ENCODE measurements at regions of chr2 and their contacts with region 1.

Region 1: DNA sequence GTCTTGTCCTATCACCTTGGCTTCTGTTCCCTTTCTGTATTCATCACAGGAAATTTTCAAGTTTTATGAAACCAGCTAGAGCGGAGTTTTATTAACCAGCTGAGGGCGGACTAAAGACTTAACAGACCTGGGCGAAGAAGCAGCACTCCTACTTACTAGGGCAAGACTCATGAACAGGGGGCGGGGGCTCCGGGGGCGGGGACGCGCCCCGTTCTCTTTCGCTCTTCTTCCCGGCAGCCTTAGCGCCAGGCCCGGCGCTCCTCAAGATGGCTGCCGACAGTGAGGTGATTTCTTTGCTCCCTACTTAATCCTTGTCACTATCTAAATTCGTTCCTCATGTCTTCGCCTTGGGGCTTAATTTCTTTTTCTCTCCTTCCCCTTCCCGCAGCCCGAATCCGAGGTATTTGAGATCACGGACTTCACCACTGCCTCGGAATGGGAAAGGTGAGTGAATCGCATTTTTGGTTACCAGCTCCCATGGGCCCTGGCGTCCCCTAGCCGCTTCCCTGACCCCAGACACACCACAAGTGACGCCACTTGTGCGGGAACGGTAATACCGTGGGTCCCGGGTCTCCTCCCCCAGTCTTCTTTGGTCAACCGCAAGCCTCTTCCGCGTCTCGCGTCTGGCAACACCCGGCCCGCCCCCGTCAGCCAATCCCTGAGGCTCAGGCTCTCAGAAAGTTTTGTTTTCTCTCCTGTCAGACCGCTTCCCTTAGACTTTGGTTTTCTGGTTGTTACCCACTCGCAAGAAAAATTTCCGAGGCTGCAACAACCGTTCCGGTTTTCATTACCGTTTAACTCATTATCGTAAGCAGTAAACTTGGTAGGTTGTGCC is at the start of gene RAB3GAP1:
- DNase-seq: peak; percentile 76 to 96 (median 94)
- ATAC-seq: peak; percentile 93
- H3K4me3 ChIP-seq: peak within 1 kb of the TSS; percentile 69
- H3K4me3 Mint-ChIP-seq: peak within 1 kb of the TSS; percentile 94 to 99 (median 97)
- H3K27ac ChIP-seq: peak within 1 kb of the TSS; percentile 99
- H3K27ac Mint-ChIP-seq: peak within 1 kb of the TSS; percentile 98 to 100 (median 99)
- H3K4me1 ChIP-seq: peaks cover 0 to 22% of the 10 kb centered on the region in 2 donors
- H3K4me1 Mint-ChIP-seq: peaks cover 24 to 52% (median 48%) of the 10 kb centered on the region in 7 donors
- H3K27me3 ChIP-seq: no peaks in the 10 kb centered on the region
- H3K27me3 Mint-ChIP-seq: peaks cover 0 to 6% (median 0%) of the 10 kb centered on the region in 5 donors
- total RNA-seq, gene RAB3GAP1: 24.3 to 58.7 (median 42.9) TPM

Region 2: DNA sequence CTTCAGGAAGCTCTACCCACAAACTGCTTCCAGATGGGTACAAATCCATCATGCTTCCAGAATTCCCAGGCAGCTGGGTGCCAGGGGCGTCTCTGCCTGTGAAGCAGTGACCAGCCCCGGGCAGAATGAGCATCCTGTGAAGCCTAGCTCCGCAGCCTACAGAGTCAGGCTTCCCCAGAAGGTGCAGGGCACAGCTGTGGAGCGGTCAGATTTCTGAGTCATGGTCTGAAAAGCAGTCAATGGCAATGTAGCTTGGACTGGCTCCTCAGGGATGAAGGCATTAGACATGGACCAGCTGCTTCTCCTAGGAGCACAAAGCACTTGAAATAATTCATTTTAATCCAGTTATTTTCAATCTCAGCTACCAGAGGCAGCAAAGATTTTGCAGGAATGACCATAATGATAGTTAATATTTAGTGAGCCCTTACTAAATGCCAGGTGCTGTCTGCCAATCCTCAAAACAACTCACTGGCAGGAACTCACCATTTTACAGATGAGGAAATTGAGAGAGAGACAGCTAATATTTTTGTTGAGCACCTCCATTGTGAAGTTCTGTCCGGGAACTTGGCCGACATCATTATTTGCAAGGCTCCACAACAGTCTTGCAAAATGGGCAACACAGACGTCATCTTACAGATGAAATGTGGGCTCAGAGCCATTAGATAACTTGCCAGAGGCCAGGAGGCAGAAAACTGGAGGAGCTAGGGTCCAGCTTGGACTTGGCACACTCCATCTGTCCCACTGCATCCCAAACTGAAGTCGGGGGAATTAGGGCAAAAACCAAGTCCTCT is 182.1 kb before region 1 on chr2:
- CTCF ChIA-PET with region 1: no interaction called
- POLR2A ChIA-PET with region 1: no interaction called
- intact Hi-C with region 1: no loop called
- DNase-seq: no peak
- ATAC-seq: no peak
- H3K4me3 ChIP-seq: no peak overlapping the region
- H3K4me3 Mint-ChIP-seq: no peak overlapping the region
- H3K27ac ChIP-seq: no peak overlapping the region
- H3K27ac Mint-ChIP-seq: no peak overlapping the region
- H3K4me1 ChIP-seq: no peaks in the 10 kb centered on the region
- H3K4me1 Mint-ChIP-seq: peaks cover 0 to 1% (median 0%) of the 10 kb centered on the region in 7 donors
- H3K27me3 ChIP-seq: no peaks in the 10 kb centered on the region
- H3K27me3 Mint-ChIP-seq: no peaks in the 10 kb centered on the region

Region 3: GRCh38 chr2:134918526-134919340 is 133.5 kb before region 1 on chr2 and contains the start of gene CCNT2:
- CTCF ChIA-PET with region 1: no interaction called
- POLR2A ChIA-PET with region 1: interaction called, 4 read pairs
- intact Hi-C with region 1: loop called (anchors 1 kb)
- DNase-seq: peak; percentile 99 to 100 (median 100)
- ATAC-seq: peak; percentile 90
- H3K4me3 ChIP-seq: peak within 1 kb of the TSS; percentile 96
- H3K4me3 Mint-ChIP-seq: peak within 1 kb of the TSS; percentile 86 to 98 (median 93)
- H3K27ac ChIP-seq: peak within 1 kb of the TSS; percentile 97
- H3K27ac Mint-ChIP-seq: peak within 1 kb of the TSS; percentile 91 to 99 (median 96)
- H3K4me1 ChIP-seq: peaks cover 31 to 45% of the 10 kb centered on the region in 2 donors
- H3K4me1 Mint-ChIP-seq: peaks cover 18 to 71% (median 48%) of the 10 kb centered on the region in 7 donors
- H3K27me3 ChIP-seq: no peaks in the 10 kb centered on the region
- H3K27me3 Mint-ChIP-seq: peaks cover 0 to 14% (median 0%) of the 10 kb centered on the region in 5 donors
- total RNA-seq, gene CCNT2: 49.8 to 78.1 (median 67.9) TPM

Region 4: DNA sequence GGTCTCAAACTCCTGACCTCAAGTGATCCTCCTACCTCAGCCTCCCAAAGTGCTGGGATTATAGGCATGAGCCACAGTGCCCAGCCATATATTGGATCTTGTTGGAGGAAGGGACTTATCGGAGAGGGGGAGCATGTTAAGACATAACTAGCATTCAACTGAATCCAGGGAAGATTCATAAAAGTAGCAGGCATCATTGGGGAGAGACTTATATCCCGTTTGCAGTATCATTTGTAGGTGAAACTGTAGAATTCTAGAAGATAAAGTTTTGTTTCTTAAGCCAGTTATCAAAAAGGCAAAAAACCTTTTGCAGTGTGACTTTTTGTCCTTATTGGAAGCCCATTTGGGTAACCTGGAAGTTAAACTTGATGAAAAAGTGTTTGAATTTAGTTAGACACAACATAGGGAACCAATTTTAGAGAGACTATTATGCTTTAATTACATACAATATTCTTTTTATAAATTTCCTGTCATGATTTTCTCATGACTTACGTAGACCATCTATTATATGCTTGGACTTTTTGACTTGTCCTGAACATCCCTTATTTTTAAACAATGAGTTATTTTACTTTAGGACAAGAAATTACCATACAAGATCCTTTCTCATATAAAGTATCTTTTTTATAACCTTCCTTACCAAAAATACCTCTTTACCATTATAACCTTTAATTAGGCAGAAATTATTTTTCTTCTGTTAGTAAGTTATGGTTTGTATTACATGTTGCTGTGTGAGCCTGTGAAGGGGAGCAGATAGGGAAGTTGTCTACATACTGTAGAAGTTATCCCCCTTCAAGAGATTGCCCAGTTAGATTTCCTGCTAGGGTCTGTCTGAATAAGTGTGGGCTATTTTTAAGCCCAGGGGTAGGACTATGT is 20.1 kb after region 1 on chr2:
- CTCF ChIA-PET with region 1: no interaction called
- POLR2A ChIA-PET with region 1: interaction called, 4 read pairs
- intact Hi-C with region 1: loop called in 1 of 2 experiments (anchors 2 kb)
- DNase-seq: no peak
- ATAC-seq: no peak
- H3K4me3 ChIP-seq: no peak overlapping the region
- H3K4me3 Mint-ChIP-seq: peak overlapping the region in 1 of 10 donors; percentile 24
- H3K27ac ChIP-seq: no peak overlapping the region
- H3K27ac Mint-ChIP-seq: peak overlapping the region in 3 of 9 donors; percentile 30 to 79 (median 34)
- H3K4me1 ChIP-seq: peaks cover 0 to 3% of the 10 kb centered on the region in 2 donors
- H3K4me1 Mint-ChIP-seq: peaks cover 0 to 57% (median 46%) of the 10 kb centered on the region in 7 donors
- H3K27me3 ChIP-seq: no peaks in the 10 kb centered on the region
- H3K27me3 Mint-ChIP-seq: no peaks in the 10 kb centered on the region

Region 5: GRCh38 chr2:135245055-135245454 is 192.8 kb after region 1 on chr2:
- CTCF ChIA-PET with region 1: no interaction called
- POLR2A ChIA-PET with region 1: no interaction called
- intact Hi-C with region 1: loop called in 1 of 2 experiments (anchors 1 kb)
- DNase-seq: no peak
- ATAC-seq: peak; percentile 18
- H3K4me3 ChIP-seq: no peak overlapping the region
- H3K4me3 Mint-ChIP-seq: no peak overlapping the region
- H3K27ac ChIP-seq: no peak overlapping the region
- H3K27ac Mint-ChIP-seq: peak overlapping the region in 2 of 9 donors; percentile 17 to 60
- H3K4me1 ChIP-seq: peaks cover 0 to 3% of the 10 kb centered on the region in 2 donors
- H3K4me1 Mint-ChIP-seq: peaks cover 0 to 14% (median 2%) of the 10 kb centered on the region in 7 donors
- H3K27me3 ChIP-seq: no peaks in the 10 kb centered on the region
- H3K27me3 Mint-ChIP-seq: no peaks in the 10 kb centered on the region

Region 6: DNA sequence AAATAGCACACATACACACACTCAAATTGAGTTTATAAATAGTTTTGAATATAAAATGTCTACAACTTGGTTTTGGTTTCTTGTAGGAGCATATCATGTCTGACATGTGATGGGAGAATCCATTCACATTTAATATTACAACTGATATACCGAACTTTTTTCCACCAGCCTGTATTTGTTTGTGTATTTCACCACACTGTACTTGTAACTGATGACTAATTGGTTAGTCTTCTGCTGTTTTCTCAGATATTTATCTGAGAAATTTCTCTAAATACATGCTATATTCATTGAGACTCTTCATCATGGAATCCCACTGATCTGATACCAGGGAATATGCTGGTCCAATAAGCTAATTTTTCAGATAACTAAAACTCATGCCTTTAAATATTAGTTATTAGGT is 633.1 kb after region 1 on chr2:
- CTCF ChIA-PET with region 1: no interaction called
- POLR2A ChIA-PET with region 1: no interaction called
- intact Hi-C with region 1: loop called in 1 of 2 experiments (anchors 2 kb)
- DNase-seq: no peak
- ATAC-seq: no peak
- H3K4me3 ChIP-seq: no peak overlapping the region
- H3K4me3 Mint-ChIP-seq: no peak overlapping the region
- H3K27ac ChIP-seq: no peak overlapping the region
- H3K27ac Mint-ChIP-seq: peak overlapping the region in 1 of 9 donors; percentile 28
- H3K4me1 ChIP-seq: peaks cover 0 to 15% of the 10 kb centered on the region in 2 donors
- H3K4me1 Mint-ChIP-seq: peaks cover 5 to 31% (median 22%) of the 10 kb centered on the region in 7 donors
- H3K27me3 ChIP-seq: no peaks in the 10 kb centered on the region
- H3K27me3 Mint-ChIP-seq: no peaks in the 10 kb centered on the region

Region 7: GRCh38 chr2:135876066-135876711 is 823.9 kb after region 1 on chr2 and contains the start of gene MCM6:
- CTCF ChIA-PET with region 1: no interaction called
- POLR2A ChIA-PET with region 1: no interaction called
- intact Hi-C with region 1: loop called (anchors 1 to 5 kb)
- DNase-seq: peak; percentile 91 to 99 (median 97)
- ATAC-seq: peak; percentile 96
- H3K4me3 ChIP-seq: peak within 1 kb of the TSS; percentile 83
- H3K4me3 Mint-ChIP-seq: peak within 1 kb of the TSS; percentile 85 to 97 (median 93)
- H3K27ac ChIP-seq: peak within 1 kb of the TSS; percentile 84
- H3K27ac Mint-ChIP-seq: peak within 1 kb of the TSS; percentile 84 to 97 (median 95)
- H3K4me1 ChIP-seq: peaks cover 12 to 18% of the 10 kb centered on the region in 2 donors
- H3K4me1 Mint-ChIP-seq: peaks cover 23 to 44% (median 41%) of the 10 kb centered on the region in 7 donors
- H3K27me3 ChIP-seq: no peaks in the 10 kb centered on the region
- H3K27me3 Mint-ChIP-seq: peaks cover 0 to 5% (median 0%) of the 10 kb centered on the region in 5 donors
- total RNA-seq, gene MCM6: 12.1 to 105 (median 21.6) TPM

Region 8: DNA sequence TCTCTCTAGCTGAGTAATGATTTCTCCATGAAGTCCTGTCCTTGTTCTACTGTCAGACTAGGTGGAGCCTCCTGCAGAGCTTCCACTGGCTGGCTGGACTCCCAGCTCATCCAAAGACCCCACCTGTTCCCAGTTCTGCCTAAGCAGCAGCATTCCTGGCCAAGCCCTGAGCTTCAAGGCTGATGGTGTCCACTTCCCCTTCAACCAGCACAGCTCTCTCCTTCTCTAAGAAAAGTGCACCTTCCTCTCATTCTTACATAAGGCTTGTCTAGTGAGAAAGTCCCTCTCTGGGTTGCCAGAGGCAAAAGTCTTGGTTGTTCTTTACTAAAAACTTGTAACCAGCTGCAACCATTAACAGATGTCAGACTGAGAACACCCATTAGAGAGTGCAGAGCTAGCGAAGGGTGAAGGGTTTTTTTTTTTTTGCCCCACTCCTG is 1006.8 kb after region 1 on chr2:
- CTCF ChIA-PET with region 1: no interaction called
- POLR2A ChIA-PET with region 1: no interaction called
- intact Hi-C with region 1: no loop called
- DNase-seq: no peak
- ATAC-seq: no peak
- H3K4me3 ChIP-seq: no peak overlapping the region
- H3K4me3 Mint-ChIP-seq: peak overlapping the region in 2 of 10 donors; percentile 43 to 50
- H3K27ac ChIP-seq: no peak overlapping the region
- H3K27ac Mint-ChIP-seq: peak overlapping the region in 5 of 9 donors; percentile 16 to 90 (median 65)
- H3K4me1 ChIP-seq: peaks cover 43 to 44% of the 10 kb centered on the region in 2 donors
- H3K4me1 Mint-ChIP-seq: peaks cover 46 to 90% (median 80%) of the 10 kb centered on the region in 7 donors
- H3K27me3 ChIP-seq: no peaks in the 10 kb centered on the region
- H3K27me3 Mint-ChIP-seq: no peaks in the 10 kb centered on the region